Activated CD4-positive, alpha-beta T cell treated with anti-CD3 and anti-CD28 coated beads for 36 hours (primary cell): ENCODE measurements at regions of chr17 and their contacts with region 1.

Region 1: DNA sequence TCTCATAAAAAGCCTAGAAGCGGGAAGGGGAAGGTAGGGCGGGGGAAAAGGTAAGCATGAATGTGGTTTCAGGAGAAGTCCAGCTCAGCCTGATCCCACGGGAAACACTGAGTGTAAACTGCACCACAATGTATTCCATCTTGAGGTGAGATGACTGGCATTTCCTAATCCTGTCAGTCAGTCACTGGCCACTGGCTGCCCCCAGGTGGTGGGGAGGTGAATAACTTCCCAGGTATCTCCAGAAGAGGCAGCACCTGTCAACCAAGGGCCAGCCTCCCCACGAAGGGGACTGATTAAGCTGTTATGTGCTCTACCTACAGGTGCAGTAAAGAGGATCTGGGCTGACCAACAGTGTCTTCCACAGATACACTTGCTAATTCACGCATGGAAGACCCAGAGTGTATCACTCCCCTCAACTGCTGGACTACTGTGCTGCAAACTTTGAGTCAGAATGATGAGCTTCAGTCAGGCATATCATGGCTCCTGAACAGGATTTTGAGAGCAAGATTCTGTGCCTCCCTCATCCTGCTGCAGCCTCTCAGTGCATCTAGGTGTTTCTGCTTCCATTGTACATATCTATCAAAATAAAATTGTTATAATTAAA is 108.5 kb upstream of the CCL2 start:
- DNase-seq: peak; percentile 81
- ATAC-seq: peak; percentile 58
- H3K4me3 Mint-ChIP-seq: no peak overlapping the region
- H3K27ac Mint-ChIP-seq: no peak overlapping the region
- H3K4me1 Mint-ChIP-seq: no peaks in the 10 kb centered on the region
- H3K27me3 Mint-ChIP-seq: peaks cover 10% of the 10 kb centered on the region

Region 2: DNA sequence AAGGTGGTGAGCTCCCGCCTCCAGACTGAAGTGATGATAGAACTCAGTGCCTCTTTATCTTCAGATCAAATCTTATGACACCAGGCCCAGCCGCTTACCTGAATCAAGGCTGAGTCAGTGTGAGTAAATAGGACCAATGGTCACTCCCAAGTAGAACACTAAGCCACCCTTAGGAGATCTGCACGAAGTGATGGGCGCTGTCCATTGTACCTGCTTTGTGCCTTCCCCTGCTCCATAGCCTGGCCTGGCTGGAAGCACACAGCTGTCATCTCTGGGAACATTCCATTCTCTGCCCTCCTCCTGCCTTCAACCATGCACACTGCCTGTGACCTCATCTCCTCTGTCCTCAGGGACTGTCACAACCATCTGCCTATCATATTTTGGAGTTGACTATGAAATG is 574.0 kb before region 1 on chr17:
- CTCF ChIA-PET with region 1: no interaction called
- POLR2A ChIA-PET with region 1: no interaction called
- intact Hi-C with region 1: no loop called
- DNase-seq: no peak
- ATAC-seq: no peak
- H3K4me3 Mint-ChIP-seq: no peak overlapping the region
- H3K27ac Mint-ChIP-seq: no peak overlapping the region
- H3K4me1 Mint-ChIP-seq: no peaks in the 10 kb centered on the region
- H3K27me3 Mint-ChIP-seq: peaks cover 9% of the 10 kb centered on the region

Region 3: DNA sequence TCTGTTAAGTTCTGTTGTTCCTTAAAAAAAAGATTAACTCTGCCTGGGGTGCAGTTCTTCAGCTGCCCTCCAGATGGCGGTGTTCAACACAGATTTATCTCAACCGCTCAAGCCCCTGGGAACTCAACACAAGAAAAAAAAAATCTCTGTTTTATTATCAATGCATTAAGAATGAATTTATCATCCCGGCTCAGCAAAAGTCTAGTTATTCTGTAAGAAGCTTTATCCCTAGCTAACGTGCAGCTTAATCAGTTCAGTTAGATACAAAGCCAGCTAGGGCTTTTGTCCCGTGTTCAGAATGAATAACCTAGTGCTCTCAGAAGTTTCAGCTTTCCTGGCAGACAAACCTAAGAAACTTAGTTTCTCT is 367.3 kb before region 1 on chr17:
- CTCF ChIA-PET with region 1: interaction called, 5 read pairs
- POLR2A ChIA-PET with region 1: no interaction called
- intact Hi-C with region 1: loop called (anchors 1 kb)
- DNase-seq: peak; percentile 59
- ATAC-seq: no peak
- H3K4me3 Mint-ChIP-seq: no peak overlapping the region
- H3K27ac Mint-ChIP-seq: no peak overlapping the region
- H3K4me1 Mint-ChIP-seq: no peaks in the 10 kb centered on the region
- H3K27me3 Mint-ChIP-seq: peaks cover 22% of the 10 kb centered on the region

Region 4: GRCh38 chr17:33927732-33928133 is 218.8 kb before region 1 on chr17:
- CTCF ChIA-PET with region 1: no interaction called
- POLR2A ChIA-PET with region 1: no interaction called
- intact Hi-C with region 1: loop called (anchors 2 to 5 kb)
- DNase-seq: no peak
- ATAC-seq: peak; percentile 23
- H3K4me3 Mint-ChIP-seq: no peak overlapping the region
- H3K27ac Mint-ChIP-seq: no peak overlapping the region
- H3K4me1 Mint-ChIP-seq: no peaks in the 10 kb centered on the region
- H3K27me3 Mint-ChIP-seq: peaks cover 3% of the 10 kb centered on the region

Region 5: DNA sequence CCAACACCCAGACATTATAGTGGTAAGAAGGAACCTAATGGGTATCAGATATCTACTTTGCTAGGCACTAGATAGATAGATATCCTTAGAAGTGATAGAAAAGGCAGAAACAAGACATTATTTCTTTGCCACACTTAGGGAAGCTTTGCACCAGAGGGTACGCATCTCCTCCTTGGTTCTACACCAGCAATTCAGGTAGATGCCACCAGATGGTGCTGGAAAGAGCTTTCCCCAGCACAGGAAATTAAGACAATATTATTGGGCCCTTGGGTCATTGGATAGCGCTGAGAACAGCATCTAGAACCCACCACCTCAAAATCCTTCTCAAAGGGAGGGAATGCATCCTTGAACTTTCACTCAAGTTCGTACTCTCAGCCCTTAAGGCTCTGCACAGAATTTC is 65.3 kb before region 1 on chr17:
- CTCF ChIA-PET with region 1: interaction called, 4 read pairs
- POLR2A ChIA-PET with region 1: no interaction called
- intact Hi-C with region 1: loop called in 1 of 2 experiments (anchors 1 kb)
- DNase-seq: no peak
- ATAC-seq: no peak
- H3K4me3 Mint-ChIP-seq: no peak overlapping the region
- H3K27ac Mint-ChIP-seq: no peak overlapping the region
- H3K4me1 Mint-ChIP-seq: no peaks in the 10 kb centered on the region
- H3K27me3 Mint-ChIP-seq: peaks cover 13% of the 10 kb centered on the region

Region 6: DNA sequence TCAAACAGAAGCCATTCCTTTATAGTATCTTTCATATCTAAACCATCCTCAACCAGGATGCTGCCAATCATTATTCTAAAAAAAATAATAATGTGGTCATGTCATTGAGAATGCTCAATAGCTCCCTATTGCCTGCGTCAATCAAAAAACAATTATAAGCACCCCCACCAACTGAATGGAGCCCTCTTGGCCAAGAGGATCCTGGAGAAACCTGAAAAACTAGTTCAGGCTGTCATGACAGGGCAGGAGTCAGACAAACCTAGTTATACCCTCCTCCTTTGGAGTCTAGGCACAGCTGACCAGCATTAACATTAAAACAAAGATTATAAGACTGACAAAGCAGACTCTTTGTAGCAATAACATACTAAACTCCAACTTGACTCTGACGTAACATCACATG is 10.7 kb before region 1 on chr17:
- CTCF ChIA-PET with region 1: interaction called, 13 read pairs
- POLR2A ChIA-PET with region 1: no interaction called
- intact Hi-C with region 1: no loop called
- DNase-seq: no peak
- ATAC-seq: no peak
- H3K4me3 Mint-ChIP-seq: no peak overlapping the region
- H3K27ac Mint-ChIP-seq: no peak overlapping the region
- H3K4me1 Mint-ChIP-seq: no peaks in the 10 kb centered on the region
- H3K27me3 Mint-ChIP-seq: peaks cover 12% of the 10 kb centered on the region